Activated B cell treated with CpG ODN at 0.5 μM for 24 hours (primary cell): ENCODE measurements at regions of chr15 and their contacts with region 1.

Region 1: GRCh38 chr15:31265871-31266711 is 60.5 kb upstream of the KLF13 start:
- DNase-seq: peak; percentile 62
- ATAC-seq: peak; percentile 59
- H3K4me3 Mint-ChIP-seq: peak overlapping the region; percentile 79
- H3K27ac Mint-ChIP-seq: peak overlapping the region; percentile 93
- H3K4me1 Mint-ChIP-seq: peaks cover 91% of the 10 kb centered on the region
- H3K27me3 Mint-ChIP-seq: no peaks in the 10 kb centered on the region
- CTCF ChIP-seq: no peak

Region 2: DNA sequence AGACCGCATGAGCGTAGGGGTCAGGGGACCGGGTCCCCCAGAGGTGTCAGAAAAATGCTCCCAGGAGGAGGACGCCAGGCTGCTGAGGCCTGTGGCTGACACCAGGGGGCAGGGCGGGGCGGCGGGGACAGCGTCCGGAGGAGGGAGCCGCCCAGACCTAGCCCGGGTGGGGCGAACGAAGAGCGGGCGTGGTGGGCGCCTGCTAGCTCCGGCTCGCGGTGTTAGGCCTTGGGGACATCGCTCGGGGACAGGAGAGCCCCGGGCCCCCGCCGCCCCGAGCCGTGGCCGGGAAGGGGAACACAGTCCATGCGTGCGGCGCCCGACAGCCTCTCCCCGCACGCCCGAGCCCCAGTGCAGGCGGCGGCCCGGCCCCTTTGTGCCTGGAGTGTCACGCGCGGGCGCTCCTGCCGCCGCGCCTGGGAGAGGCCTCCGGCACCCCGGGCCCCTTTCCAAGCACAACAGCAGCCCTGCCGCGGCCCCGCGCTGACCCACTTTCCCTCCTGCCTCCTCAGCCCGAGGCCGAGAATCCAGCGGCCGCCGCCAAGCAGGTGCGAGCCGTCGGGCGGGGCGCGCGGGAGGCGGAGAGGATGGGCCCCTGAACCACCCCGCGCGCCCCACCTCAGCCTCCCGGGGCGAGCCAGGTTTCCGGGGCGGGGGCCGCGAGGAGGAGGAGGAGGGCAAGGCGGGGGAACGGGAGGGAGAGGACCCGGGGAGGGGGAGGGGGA is 50.4 kb before region 1 on chr15:
- CTCF ChIA-PET with region 1: interaction called, 33 read pairs
- POLR2A ChIA-PET with region 1: interaction called, 173 read pairs
- intact Hi-C with region 1: loop called (anchors 1 kb)
- DNase-seq: peak; percentile 86
- ATAC-seq: peak; percentile 80
- H3K4me3 Mint-ChIP-seq: peak overlapping the region; percentile 88
- H3K27ac Mint-ChIP-seq: peak overlapping the region; percentile 93
- H3K4me1 Mint-ChIP-seq: peaks cover 44% of the 10 kb centered on the region
- H3K27me3 Mint-ChIP-seq: no peaks in the 10 kb centered on the region
- CTCF ChIP-seq: no peak

Region 3: GRCh38 chr15:31241888-31242522 is 24.1 kb before region 1 on chr15:
- CTCF ChIA-PET with region 1: interaction called, 4 read pairs
- POLR2A ChIA-PET with region 1: interaction called, 58 read pairs
- intact Hi-C with region 1: no loop called
- DNase-seq: no peak
- ATAC-seq: no peak
- H3K4me3 Mint-ChIP-seq: no peak overlapping the region
- H3K27ac Mint-ChIP-seq: no peak overlapping the region
- H3K4me1 Mint-ChIP-seq: peaks cover 18% of the 10 kb centered on the region
- H3K27me3 Mint-ChIP-seq: no peaks in the 10 kb centered on the region
- CTCF ChIP-seq: no peak

Region 4: GRCh38 chr15:31302778-31303725 is 37.0 kb after region 1 on chr15:
- CTCF ChIA-PET with region 1: no interaction called
- POLR2A ChIA-PET with region 1: interaction called, 11 read pairs
- intact Hi-C with region 1: loop called (anchors 2 kb)
- DNase-seq: no peak
- ATAC-seq: peak; percentile 38
- H3K4me3 Mint-ChIP-seq: no peak overlapping the region
- H3K27ac Mint-ChIP-seq: peak overlapping the region; percentile 24
- H3K4me1 Mint-ChIP-seq: peaks cover 40% of the 10 kb centered on the region
- H3K27me3 Mint-ChIP-seq: no peaks in the 10 kb centered on the region
- CTCF ChIP-seq: no peak

Region 5: GRCh38 chr15:31365655-31366127 is 99.6 kb after region 1 on chr15:
- CTCF ChIA-PET with region 1: interaction called, 6 read pairs
- POLR2A ChIA-PET with region 1: interaction called, 13 read pairs
- intact Hi-C with region 1: loop called (anchors 10 kb)
- DNase-seq: peak; percentile 48
- ATAC-seq: peak; percentile 48
- H3K4me3 Mint-ChIP-seq: peak overlapping the region; percentile 67
- H3K27ac Mint-ChIP-seq: peak overlapping the region; percentile 66
- H3K4me1 Mint-ChIP-seq: peaks cover 99% of the 10 kb centered on the region
- H3K27me3 Mint-ChIP-seq: no peaks in the 10 kb centered on the region
- CTCF ChIP-seq: no peak

Region 6: GRCh38 chr15:31472636-31473384 is 206.7 kb after region 1 on chr15:
- CTCF ChIA-PET with region 1: no interaction called
- POLR2A ChIA-PET with region 1: interaction called, 3 read pairs
- intact Hi-C with region 1: loop called (anchors 5 kb)
- DNase-seq: no peak
- ATAC-seq: peak; percentile 80
- H3K4me3 Mint-ChIP-seq: peak overlapping the region; percentile 80
- H3K27ac Mint-ChIP-seq: peak overlapping the region; percentile 93
- H3K4me1 Mint-ChIP-seq: peaks cover 45% of the 10 kb centered on the region
- H3K27me3 Mint-ChIP-seq: no peaks in the 10 kb centered on the region
- CTCF ChIP-seq: no peak